GM12878 (cell line): ENCODE measurements at regions of chr22 and their contacts with region 1.

Region 1: DNA sequence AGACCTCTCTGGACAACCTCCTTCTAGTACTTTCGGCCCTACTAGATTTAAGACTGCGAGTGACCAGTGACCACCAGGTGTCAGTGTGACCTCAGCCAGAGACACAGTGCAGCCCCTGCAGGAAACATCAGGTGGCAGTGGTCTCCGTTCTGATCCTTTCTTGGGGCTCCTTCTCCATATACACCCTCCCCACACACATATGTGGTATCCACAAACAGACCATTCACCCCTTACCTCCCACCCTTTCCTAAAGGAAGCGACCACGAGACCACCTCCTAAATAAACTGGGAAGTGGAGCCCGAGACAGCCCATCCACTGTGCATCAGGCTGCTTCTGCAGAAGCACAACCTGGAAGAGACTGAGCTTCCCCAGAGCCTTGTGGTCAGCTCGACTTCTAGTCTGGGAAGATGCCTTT is 38.5 kb upstream of the CYP2D6 start:
- DNase-seq: peak; percentile 51
- ATAC-seq: peak; percentile 97
- H3K4me3 ChIP-seq: no peak overlapping the region
- H3K27ac ChIP-seq: no peak overlapping the region
- H3K4me1 ChIP-seq: peaks cover 10% of the 10 kb centered on the region
- H3K27me3 ChIP-seq: no peaks in the 10 kb centered on the region
- CTCF ChIP-seq: peak; percentile 93 to 100 (median 96); a peak in 5 of 6 replicates
- EP300 ChIP-seq: no peak
- POLR2A ChIP-seq: no peak
- RAD21 ChIP-seq: peak; percentile 100

Region 2: GRCh38 chr22:41976961-41977566 is 192.0 kb before region 1 on chr22:
- CTCF ChIA-PET with region 1: no interaction called
- POLR2A ChIA-PET with region 1: no interaction called
- RAD21 ChIA-PET with region 1: no interaction called
- SMC1A ChIA-PET with region 1: no interaction called
- in situ Hi-C with region 1: no loop called
- intact Hi-C with region 1: no loop called
- DNase-seq: no peak
- ATAC-seq: no peak; the same call in 2 of the 3 replicates
- H3K4me3 ChIP-seq: peak overlapping the region; percentile 29; the same call in 1 of the 2 replicates
- H3K27ac ChIP-seq: no peak overlapping the region
- H3K4me1 ChIP-seq: peaks cover 7% of the 10 kb centered on the region
- H3K27me3 ChIP-seq: peaks cover 5 to 12% of the 10 kb centered on the region in 2 experiments
- CTCF ChIP-seq: no peak
- EP300 ChIP-seq: no peak
- POLR2A ChIP-seq: no peak
- RAD21 ChIP-seq: no peak

Region 3: DNA sequence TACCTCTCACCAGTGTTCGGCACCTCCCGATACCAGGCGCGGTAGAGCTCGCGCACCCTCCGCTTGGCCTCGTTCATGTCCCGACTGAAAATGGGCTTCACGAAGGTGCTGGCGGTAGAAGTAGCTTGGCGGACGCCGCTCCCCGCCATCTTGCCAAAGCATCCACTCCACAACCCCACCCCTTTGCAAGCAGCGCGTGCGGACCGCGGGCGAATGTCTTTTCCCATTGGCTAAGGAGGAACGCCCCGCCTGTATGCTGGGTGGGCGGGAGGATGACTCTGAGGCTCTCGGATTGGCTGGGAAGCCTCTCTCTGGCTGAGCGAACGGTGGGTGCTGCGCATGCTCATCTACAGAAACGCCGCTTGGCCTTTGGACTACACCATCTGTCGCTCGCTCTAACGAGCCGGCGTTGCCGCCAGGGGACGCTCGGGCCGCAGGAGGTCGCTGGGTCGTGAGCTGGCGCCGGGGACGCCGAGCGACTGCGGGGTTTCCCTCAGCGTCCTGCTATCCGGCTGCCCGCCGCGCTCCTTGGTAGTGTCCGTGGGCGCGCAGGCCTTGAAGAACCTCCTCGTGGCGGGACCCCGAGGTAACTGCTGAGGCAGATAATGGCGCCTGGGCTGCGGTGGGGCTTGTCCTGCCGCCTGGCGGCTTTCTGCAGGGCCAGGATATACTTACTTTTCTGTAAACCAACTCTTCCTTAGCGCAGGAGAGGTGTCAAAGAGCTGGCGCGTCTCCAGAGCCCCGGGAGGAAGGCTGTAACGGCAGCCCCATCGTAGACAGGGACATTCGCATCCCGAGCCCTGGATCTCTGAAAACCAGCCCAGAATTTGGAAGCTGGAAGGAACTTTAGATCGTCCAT is 78.2 kb before region 1 on chr22 and contains the start of gene NDUFA6:
- CTCF ChIA-PET with region 1: interaction called, 6 read pairs
- POLR2A ChIA-PET with region 1: interaction called, 7 read pairs
- RAD21 ChIA-PET with region 1: interaction called, 16 read pairs
- SMC1A ChIA-PET with region 1: interaction called, 6 read pairs
- in situ Hi-C with region 1: no loop called
- intact Hi-C with region 1: no loop called
- DNase-seq: peak; percentile 99
- ATAC-seq: peak; percentile 95
- H3K4me3 ChIP-seq: peak within 1 kb of the TSS; percentile 82
- H3K27ac ChIP-seq: peak within 1 kb of the TSS; percentile 87
- H3K4me1 ChIP-seq: 0 out of 2 replicates have a peak, but pooled peaks cover 3% of the 10 kb centered on the region
- H3K27me3 ChIP-seq: no peaks in the 10 kb centered on the region
- CTCF ChIP-seq: peak; percentile 95 to 99 (median 96); a peak in 5 of 6 replicates
- EP300 ChIP-seq: no peak
- POLR2A ChIP-seq: peak; percentile 98
- RAD21 ChIP-seq: peak; percentile 84
- polyA plus RNA-seq, gene NDUFA6: 473 to 511 TPM

Region 4: DNA sequence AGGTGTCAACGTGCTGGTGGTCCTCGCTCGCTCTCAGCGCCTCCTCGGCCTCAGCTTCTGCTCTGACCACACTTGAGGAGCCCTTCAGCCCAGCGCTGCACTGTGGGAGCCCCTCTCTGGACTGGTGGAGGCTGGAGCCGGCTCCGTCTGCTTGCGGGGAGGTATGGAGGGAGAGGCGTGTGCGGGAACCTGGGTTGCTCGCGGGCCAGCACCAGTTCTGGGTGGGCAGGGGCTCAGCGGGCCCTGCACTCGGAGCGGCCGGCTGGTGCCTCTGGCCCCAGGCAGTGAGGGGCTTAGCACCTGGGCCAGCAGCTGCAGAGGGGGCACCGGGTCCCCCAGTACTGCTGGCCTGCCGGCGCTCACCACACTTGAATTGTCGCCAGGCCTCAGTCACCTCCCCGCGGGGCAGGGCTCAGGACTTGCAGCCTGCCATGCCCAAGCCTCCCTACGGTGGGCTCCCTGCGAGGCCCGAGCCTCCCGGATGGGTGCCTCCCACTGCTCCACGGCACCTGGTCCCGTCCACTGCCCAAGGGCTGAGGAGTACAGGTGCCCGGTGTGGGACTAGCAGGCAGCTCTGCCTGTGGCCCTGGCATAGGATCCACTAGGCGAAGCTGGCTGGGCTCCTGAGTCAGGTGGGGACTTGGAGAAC is 30.8 kb before region 1 on chr22:
- CTCF ChIA-PET with region 1: no interaction called
- POLR2A ChIA-PET with region 1: no interaction called
- RAD21 ChIA-PET with region 1: no interaction called
- SMC1A ChIA-PET with region 1: no interaction called
- in situ Hi-C with region 1: no loop called
- intact Hi-C with region 1: no loop called
- DNase-seq: no peak
- ATAC-seq: no peak
- H3K4me3 ChIP-seq: no peak overlapping the region
- H3K27ac ChIP-seq: no peak overlapping the region
- H3K4me1 ChIP-seq: no peaks in the 10 kb centered on the region
- H3K27me3 ChIP-seq: no peaks in the 10 kb centered on the region
- CTCF ChIP-seq: no peak
- EP300 ChIP-seq: no peak
- POLR2A ChIP-seq: no peak
- RAD21 ChIP-seq: no peak

Region 5: GRCh38 chr22:42217019-42217751 is 48.1 kb after region 1 on chr22:
- CTCF ChIA-PET with region 1: no interaction called
- POLR2A ChIA-PET with region 1: interaction called, 3 read pairs
- RAD21 ChIA-PET with region 1: interaction called, 11 read pairs
- SMC1A ChIA-PET with region 1: interaction called, 6 read pairs
- in situ Hi-C with region 1: no loop called
- intact Hi-C with region 1: no loop called
- DNase-seq: peak; percentile 19
- ATAC-seq: peak; percentile 56
- H3K4me3 ChIP-seq: no peak overlapping the region
- H3K27ac ChIP-seq: peak overlapping the region; percentile 66
- H3K4me1 ChIP-seq: peaks cover 23% of the 10 kb centered on the region
- H3K27me3 ChIP-seq: no peaks in the 10 kb centered on the region
- CTCF ChIP-seq: no peak
- EP300 ChIP-seq: no peak
- POLR2A ChIP-seq: no peak
- RAD21 ChIP-seq: no peak

Region 6: DNA sequence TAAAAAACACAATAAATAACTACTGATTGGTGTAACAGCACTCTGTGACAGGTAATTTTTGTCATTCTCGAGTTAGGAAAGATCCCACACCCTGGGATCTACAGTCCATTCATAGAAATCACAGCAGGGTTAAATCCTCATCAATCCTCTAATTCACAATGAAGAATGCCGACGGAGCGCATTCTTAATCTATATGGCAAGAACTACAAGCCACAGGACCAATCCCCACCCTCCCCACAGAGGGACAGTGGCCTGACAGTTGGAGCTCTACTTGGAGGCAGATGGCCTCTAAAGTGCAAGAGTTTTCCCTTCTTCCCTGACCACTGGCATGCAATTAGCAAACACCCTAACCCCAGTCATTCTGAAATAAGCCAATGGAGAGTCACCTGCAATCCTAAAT is 67.2 kb after region 1 on chr22:
- CTCF ChIA-PET with region 1: no interaction called
- POLR2A ChIA-PET with region 1: no interaction called
- RAD21 ChIA-PET with region 1: no interaction called
- SMC1A ChIA-PET with region 1: no interaction called
- in situ Hi-C with region 1: no loop called
- intact Hi-C with region 1: no loop called
- DNase-seq: no peak
- ATAC-seq: no peak
- H3K4me3 ChIP-seq: no peak overlapping the region
- H3K27ac ChIP-seq: no peak overlapping the region
- H3K4me1 ChIP-seq: no peaks in the 10 kb centered on the region
- H3K27me3 ChIP-seq: no peaks in the 10 kb centered on the region
- CTCF ChIP-seq: no peak
- EP300 ChIP-seq: no peak
- POLR2A ChIP-seq: no peak
- RAD21 ChIP-seq: no peak

Region 7: DNA sequence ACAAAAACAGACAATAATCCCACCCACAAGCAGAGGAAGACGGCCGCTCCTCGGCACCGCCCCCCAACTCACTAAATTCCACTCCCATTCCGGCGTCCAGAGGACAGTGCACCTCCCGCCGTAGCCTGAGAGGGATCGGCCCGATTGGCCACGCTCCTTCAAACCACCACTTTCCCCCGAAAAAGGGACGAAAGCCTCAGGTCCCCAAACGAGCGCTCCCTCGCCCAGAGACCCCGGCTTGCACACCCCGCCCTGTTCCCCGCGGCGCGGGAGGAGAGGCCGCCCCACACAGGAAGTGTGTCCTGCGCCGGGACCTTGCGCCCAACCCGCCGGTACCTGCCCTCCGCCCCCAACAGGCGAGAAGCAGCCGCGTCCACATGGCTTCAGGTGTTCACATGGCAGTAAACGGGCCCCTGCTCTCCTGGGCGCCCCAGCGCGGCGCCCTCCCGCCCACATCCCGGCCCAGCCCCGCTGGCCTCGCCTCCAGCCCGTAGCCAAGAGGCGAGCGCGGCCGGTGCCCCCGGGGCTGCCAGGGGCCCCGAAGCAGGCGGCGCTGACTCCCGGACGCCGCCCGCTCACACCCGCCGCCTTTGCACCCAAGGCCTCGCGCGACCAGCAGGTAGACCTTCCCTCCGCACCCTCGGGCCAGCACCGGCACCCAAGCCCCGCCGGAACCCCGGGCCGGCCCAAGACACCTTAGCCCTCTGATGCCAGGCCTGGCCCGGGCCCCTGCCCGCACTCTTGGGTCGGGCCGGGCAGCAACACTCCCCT is 100.5 kb after region 1 on chr22:
- CTCF ChIA-PET with region 1: interaction called, 12 read pairs
- POLR2A ChIA-PET with region 1: interaction called, 3 read pairs
- RAD21 ChIA-PET with region 1: interaction called, 5 read pairs
- SMC1A ChIA-PET with region 1: interaction called, 6 read pairs
- in situ Hi-C with region 1: no loop called
- intact Hi-C with region 1: loop called (anchors 2 kb)
- DNase-seq: no peak
- ATAC-seq: peak; percentile 88
- H3K4me3 ChIP-seq: peak overlapping the region; percentile 97
- H3K27ac ChIP-seq: peak overlapping the region; percentile 81
- H3K4me1 ChIP-seq: peaks cover 8% of the 10 kb centered on the region; the same call in 1 of the 2 replicates
- H3K27me3 ChIP-seq: no peaks in the 10 kb centered on the region
- CTCF ChIP-seq: peak in 2 of 3 experiments; percentile 24 to 36; a peak in 2 of 6 replicates
- EP300 ChIP-seq: no peak
- POLR2A ChIP-seq: peak; percentile 83
- RAD21 ChIP-seq: 0 out of 2 replicates have a peak, but pooled peaks have one; percentile 10

Region 8: DNA sequence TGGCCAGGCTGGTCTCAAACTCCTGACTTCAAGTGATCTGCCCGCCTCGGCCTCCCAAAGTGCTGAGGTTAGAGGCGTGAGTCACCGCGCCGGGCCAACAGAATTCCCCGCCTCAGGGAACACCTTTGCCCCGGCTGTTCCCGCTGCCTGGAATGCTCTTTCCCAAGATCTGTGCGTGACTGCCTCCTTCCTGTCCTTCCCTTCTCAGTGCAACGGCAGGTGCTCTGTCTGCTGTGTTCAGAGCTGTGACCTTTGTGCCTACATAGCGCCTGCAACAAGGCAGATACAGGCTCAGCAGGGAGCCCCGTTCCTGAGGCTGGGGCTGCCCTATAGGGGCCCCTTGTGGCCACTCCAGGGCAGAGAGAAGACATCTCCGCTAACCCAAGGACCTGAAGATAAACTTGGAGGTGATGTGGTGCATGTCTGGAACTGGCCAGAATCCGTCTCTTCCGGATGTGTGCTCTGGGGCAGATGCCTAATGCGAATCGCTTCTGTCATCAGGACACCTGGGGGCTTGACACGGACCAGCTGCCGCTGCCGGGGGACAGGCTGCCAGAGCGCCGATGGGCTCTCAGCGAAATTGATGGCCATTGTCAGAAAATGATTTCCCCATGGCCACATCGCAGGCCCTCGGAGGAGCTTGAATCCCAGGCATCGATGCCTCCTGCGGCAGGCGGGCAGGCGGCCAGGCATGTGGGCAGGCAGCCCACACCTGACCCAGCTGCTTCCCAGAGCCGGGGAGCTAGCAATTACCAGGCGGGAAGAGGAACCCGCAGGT is 144.9 kb after region 1 on chr22:
- CTCF ChIA-PET with region 1: interaction called, 14 read pairs
- POLR2A ChIA-PET with region 1: no interaction called
- RAD21 ChIA-PET with region 1: interaction called, 19 read pairs
- SMC1A ChIA-PET with region 1: interaction called, 12 read pairs
- in situ Hi-C with region 1: no loop called
- intact Hi-C with region 1: no loop called
- DNase-seq: no peak
- ATAC-seq: peak; percentile 67
- H3K4me3 ChIP-seq: no peak overlapping the region
- H3K27ac ChIP-seq: no peak overlapping the region
- H3K4me1 ChIP-seq: peaks cover 4% of the 10 kb centered on the region
- H3K27me3 ChIP-seq: no peaks in the 10 kb centered on the region; a peak in 1 of 4 replicates
- CTCF ChIP-seq: peak; percentile 33 to 47 (median 35); a peak in 4 of 6 replicates
- EP300 ChIP-seq: no peak
- POLR2A ChIP-seq: no peak
- RAD21 ChIP-seq: peak; percentile 57

Region 9: GRCh38 chr22:42444077-42444904 is 275.2 kb after region 1 on chr22:
- CTCF ChIA-PET with region 1: interaction called, 133 read pairs
- POLR2A ChIA-PET with region 1: interaction called, 7 read pairs
- RAD21 ChIA-PET with region 1: interaction called, 22 read pairs
- SMC1A ChIA-PET with region 1: interaction called, 132 read pairs
- in situ Hi-C with region 1: loop called (anchors 5 kb)
- intact Hi-C with region 1: no loop called
- DNase-seq: peak; percentile 73
- ATAC-seq: peak; percentile 67
- H3K4me3 ChIP-seq: peak overlapping the region; percentile 46; the same call in 1 of the 2 replicates
- H3K27ac ChIP-seq: peak overlapping the region; percentile 80
- H3K4me1 ChIP-seq: peaks cover 34% of the 10 kb centered on the region
- H3K27me3 ChIP-seq: no peaks in the 10 kb centered on the region
- CTCF ChIP-seq: peak; percentile 69 to 89 (median 75)
- EP300 ChIP-seq: no peak
- POLR2A ChIP-seq: peak; percentile 81
- RAD21 ChIP-seq: peak; percentile 63